IMR-90 (cell line): ENCODE measurements at regions of chr3 and their contacts with region 1.

Region 1: DNA sequence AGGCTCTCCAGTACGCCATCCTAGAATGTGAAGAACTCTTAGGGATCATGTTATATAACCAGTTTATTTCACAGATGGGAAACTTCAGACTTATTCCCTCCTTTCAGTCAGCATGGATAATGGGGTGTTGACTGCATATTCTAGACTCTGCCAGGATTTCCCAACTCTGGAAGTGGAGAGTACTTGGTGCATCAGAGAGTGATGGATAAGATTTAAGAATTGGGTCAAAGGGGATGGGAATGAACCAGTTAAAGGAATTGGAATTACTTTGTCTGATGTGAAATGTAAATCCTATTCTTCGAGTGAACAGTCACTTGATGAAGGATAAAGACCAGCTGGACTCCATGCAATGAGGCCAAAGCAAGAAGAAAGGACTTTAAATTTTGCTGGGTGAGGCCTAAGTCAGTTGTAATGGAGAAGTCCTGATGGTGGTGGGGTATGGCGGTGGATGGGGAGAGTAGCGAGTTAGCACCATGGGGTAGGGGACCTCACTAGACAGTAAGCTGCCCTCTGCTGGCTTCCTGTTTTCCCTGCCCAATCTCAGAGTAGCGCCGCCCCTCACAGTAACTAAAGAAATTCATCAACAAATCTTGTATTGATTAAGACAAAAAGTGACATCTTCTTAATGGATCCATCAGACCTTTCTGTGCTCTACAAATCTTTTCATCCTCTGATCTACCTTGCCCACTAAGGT is 7.3 kb upstream of the CACNA1D start:
- DNase-seq: no peak
- ATAC-seq: no peak
- H3K4me3 ChIP-seq: no peak overlapping the region
- H3K27ac ChIP-seq: no peak overlapping the region
- H3K4me1 ChIP-seq: no peaks in the 10 kb centered on the region
- H3K27me3 ChIP-seq: peaks cover 8% of the 10 kb centered on the region
- CTCF ChIP-seq: no peak
- POLR2A ChIP-seq: no peak
- RAD21 ChIP-seq: no peak

Region 2: DNA sequence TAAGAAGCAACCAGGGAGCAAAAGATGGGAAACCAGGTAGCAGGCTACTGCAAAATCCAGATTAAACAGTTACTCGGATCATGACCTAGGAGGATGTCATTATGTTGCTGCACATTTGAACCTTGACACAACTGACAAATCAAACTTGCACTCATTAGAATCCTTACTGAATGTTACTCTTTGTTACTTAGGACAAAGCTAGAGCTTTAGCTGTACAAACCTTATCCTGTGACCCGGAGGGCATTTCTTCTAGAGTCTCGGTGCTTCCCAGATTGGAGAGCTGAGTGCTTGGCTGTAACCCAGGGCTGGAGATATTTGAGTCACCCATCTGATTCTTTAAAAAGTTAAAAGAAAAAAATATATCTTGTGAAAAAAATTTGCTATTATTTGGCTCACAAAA is 183.2 kb before region 1 on chr3:
- CTCF ChIA-PET with region 1: no interaction called
- POLR2A ChIA-PET with region 1: no interaction called
- dilution Hi-C with region 1: no loop called
- in situ Hi-C with region 1: no loop called
- intact Hi-C with region 1: no loop called
- DNase-seq: peak; percentile 11
- ATAC-seq: no peak
- H3K4me3 ChIP-seq: no peak overlapping the region
- H3K27ac ChIP-seq: no peak overlapping the region
- H3K4me1 ChIP-seq: peaks cover 2% of the 10 kb centered on the region; the same call in 1 of the 2 replicates
- H3K27me3 ChIP-seq: no peaks in the 10 kb centered on the region
- CTCF ChIP-seq: no peak
- POLR2A ChIP-seq: no peak
- RAD21 ChIP-seq: no peak

Region 3: DNA sequence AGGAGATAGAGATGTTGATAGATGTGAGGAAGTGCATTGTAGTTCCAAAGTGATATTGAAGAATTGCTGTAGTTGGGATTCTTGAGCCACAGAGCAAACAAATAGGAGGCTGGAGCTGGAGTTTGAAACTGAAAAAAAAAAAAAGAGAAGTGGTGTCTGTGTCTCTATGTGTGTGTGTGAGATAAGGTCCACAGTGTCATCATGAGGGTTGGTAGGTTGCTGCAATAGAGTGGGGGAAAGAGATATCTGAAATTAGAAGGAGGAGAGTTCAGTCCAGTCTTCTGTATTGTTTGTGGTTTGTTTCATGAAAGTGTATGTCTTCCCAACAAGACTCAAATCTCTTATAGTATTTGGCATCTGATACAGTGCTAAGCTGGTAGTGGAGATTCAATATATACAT is 30.0 kb before region 1 on chr3:
- CTCF ChIA-PET with region 1: interaction called, 11 read pairs
- POLR2A ChIA-PET with region 1: no interaction called
- dilution Hi-C with region 1: no loop called
- in situ Hi-C with region 1: no loop called
- intact Hi-C with region 1: no loop called
- DNase-seq: no peak
- ATAC-seq: no peak
- H3K4me3 ChIP-seq: no peak overlapping the region
- H3K27ac ChIP-seq: no peak overlapping the region
- H3K4me1 ChIP-seq: no peaks in the 10 kb centered on the region
- H3K27me3 ChIP-seq: no peaks in the 10 kb centered on the region
- CTCF ChIP-seq: no peak
- POLR2A ChIP-seq: no peak
- RAD21 ChIP-seq: no peak